ENCODE measurements at regions of chr19 and their contacts with region 1.

Region 1: DNA sequence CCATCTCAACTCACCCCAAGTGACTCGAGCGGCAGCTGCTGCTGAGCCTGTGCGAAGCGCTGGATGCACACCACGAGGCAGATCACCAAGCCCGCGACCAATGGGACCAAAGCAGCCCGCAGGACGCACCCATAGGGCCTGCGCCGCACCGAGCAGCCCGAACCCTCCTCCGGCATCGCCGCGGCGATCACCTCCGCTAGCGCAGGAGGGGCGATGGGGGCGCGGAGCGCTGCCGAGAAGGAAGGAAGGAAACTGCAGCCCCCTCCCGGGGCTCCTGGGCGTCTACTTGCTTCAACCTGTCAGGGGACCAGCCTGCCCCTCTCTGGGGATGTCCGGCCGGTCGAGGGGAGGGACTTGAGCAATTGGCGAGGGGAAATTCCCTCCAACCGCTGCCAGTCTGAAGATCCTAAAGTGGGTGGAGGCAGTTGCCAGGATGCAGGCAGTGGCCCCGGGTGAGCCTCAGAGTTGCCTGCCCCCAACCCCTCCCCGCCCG is at the start of gene CD70:
- DNase-seq: peak; percentile 64
- ATAC-seq: peak; percentile 67
- H3K4me3 Mint-ChIP-seq: peak within 1 kb of the TSS; percentile 88
- H3K27ac Mint-ChIP-seq: peak within 1 kb of the TSS; percentile 82
- H3K4me1 Mint-ChIP-seq: peaks cover 68% of the 10 kb centered on the region
- H3K27me3 Mint-ChIP-seq: peaks cover 17% of the 10 kb centered on the region
- CTCF ChIP-seq: no peak
- total RNA-seq, gene CD70: 29.3 and 29.7 TPM in 2 replicates

Region 2: GRCh38 chr19:6362027-6362350 is 228.9 kb before region 1 on chr19:
- CTCF ChIA-PET with region 1: no interaction called
- POLR2A ChIA-PET with region 1: no interaction called
- intact Hi-C with region 1: loop called (anchors 5 kb)
- DNase-seq: no peak
- ATAC-seq: no peak
- H3K4me3 Mint-ChIP-seq: peak overlapping the region; percentile 87
- H3K27ac Mint-ChIP-seq: peak overlapping the region; percentile 78
- H3K4me1 Mint-ChIP-seq: peaks cover 11% of the 10 kb centered on the region
- H3K27me3 Mint-ChIP-seq: no peaks in the 10 kb centered on the region
- CTCF ChIP-seq: no peak

Region 3: DNA sequence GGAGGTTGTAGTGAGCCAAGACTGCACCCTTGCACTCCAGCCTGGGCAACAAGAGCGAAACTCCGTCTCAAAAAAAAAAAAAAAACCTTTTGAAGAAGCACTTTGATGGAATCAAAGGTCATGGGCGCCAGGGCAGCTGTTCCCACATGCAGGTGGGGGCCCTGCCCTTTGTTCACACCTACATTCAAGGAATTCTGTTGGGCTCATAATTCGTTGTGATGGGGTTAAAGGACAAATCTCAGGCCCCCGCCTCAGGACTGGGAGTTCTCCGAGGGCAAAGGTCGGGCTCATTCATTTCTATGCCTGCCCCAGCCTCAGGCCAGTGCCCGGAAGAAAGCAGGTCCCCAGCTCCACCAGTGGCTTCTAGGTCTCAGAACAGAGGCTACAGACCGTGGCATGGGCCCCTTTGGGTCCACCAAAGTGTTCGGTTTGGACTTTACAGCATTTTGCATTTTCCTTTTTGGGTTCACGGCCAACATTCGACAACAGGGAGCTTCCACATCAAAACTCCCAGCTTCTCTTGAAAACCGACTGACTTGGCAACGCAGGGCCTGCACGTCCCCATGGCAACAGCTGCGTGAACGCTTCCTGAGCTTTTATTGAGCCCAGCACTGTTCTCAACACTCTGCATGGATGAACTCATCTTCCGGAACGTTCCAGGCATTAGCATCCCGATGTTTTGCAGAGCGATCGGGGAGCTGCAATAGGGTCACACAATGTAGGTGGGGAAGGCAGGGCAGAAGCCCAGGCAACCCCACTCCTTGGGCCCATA is 187.8 kb before region 1 on chr19:
- CTCF ChIA-PET with region 1: no interaction called
- POLR2A ChIA-PET with region 1: no interaction called
- intact Hi-C with region 1: no loop called
- DNase-seq: no peak
- ATAC-seq: no peak
- H3K4me3 Mint-ChIP-seq: no peak overlapping the region
- H3K27ac Mint-ChIP-seq: no peak overlapping the region
- H3K4me1 Mint-ChIP-seq: no peaks in the 10 kb centered on the region
- H3K27me3 Mint-ChIP-seq: no peaks in the 10 kb centered on the region
- CTCF ChIP-seq: no peak

Region 4: GRCh38 chr19:6521718-6522646 is 68.9 kb before region 1 on chr19:
- CTCF ChIA-PET with region 1: interaction called, 5 read pairs
- POLR2A ChIA-PET with region 1: interaction called, 26 read pairs
- intact Hi-C with region 1: loop called (anchors 1 kb)
- DNase-seq: peak; percentile 70
- ATAC-seq: peak; percentile 73
- H3K4me3 Mint-ChIP-seq: peak overlapping the region; percentile 75
- H3K27ac Mint-ChIP-seq: peak overlapping the region; percentile 99
- H3K4me1 Mint-ChIP-seq: peaks cover 55% of the 10 kb centered on the region
- H3K27me3 Mint-ChIP-seq: no peaks in the 10 kb centered on the region
- CTCF ChIP-seq: no peak

Region 5: GRCh38 chr19:6535558-6536137 is 55.2 kb before region 1 on chr19:
- CTCF ChIA-PET with region 1: no interaction called
- POLR2A ChIA-PET with region 1: interaction called, 34 read pairs
- intact Hi-C with region 1: no loop called
- DNase-seq: no peak
- ATAC-seq: no peak
- H3K4me3 Mint-ChIP-seq: peak overlapping the region; percentile 59
- H3K27ac Mint-ChIP-seq: peak overlapping the region; percentile 83
- H3K4me1 Mint-ChIP-seq: peaks cover 57% of the 10 kb centered on the region
- H3K27me3 Mint-ChIP-seq: peaks cover 5% of the 10 kb centered on the region
- CTCF ChIP-seq: no peak

Region 6: GRCh38 chr19:6577476-6578125 is 13.3 kb before region 1 on chr19:
- CTCF ChIA-PET with region 1: no interaction called
- POLR2A ChIA-PET with region 1: interaction called, 38 read pairs
- intact Hi-C with region 1: loop called (anchors 1 kb)
- DNase-seq: peak; percentile 54
- ATAC-seq: peak; percentile 90
- H3K4me3 Mint-ChIP-seq: peak overlapping the region; percentile 68
- H3K27ac Mint-ChIP-seq: no peak overlapping the region
- H3K4me1 Mint-ChIP-seq: peaks cover 6% of the 10 kb centered on the region
- H3K27me3 Mint-ChIP-seq: no peaks in the 10 kb centered on the region
- CTCF ChIP-seq: no peak

Region 7: DNA sequence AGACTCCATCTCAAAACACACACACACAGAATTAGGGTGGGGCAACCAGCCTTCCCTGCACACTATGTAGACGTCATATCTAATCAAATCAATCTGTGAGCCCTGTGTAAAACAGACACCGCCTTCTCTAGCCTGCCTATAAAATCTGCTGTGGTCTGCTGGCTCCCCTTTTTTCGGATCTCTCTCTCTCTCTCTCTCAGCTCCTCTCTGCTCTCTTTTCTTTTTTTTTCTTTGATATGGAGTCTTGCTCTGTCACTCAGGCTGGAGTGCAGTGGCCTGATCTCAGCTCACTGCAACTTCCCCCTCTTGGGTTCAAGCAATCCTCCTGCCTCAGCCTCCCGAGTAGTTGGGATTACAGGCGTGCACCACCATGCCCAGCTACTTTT is 11.8 kb after region 1 on chr19:
- CTCF ChIA-PET with region 1: no interaction called
- POLR2A ChIA-PET with region 1: interaction called, 4 read pairs
- intact Hi-C with region 1: loop called (anchors 1 kb)
- DNase-seq: no peak
- ATAC-seq: no peak
- H3K4me3 Mint-ChIP-seq: no peak overlapping the region
- H3K27ac Mint-ChIP-seq: peak overlapping the region; percentile 46
- H3K4me1 Mint-ChIP-seq: peaks cover 46% of the 10 kb centered on the region
- H3K27me3 Mint-ChIP-seq: no peaks in the 10 kb centered on the region
- CTCF ChIP-seq: no peak

Region 8: DNA sequence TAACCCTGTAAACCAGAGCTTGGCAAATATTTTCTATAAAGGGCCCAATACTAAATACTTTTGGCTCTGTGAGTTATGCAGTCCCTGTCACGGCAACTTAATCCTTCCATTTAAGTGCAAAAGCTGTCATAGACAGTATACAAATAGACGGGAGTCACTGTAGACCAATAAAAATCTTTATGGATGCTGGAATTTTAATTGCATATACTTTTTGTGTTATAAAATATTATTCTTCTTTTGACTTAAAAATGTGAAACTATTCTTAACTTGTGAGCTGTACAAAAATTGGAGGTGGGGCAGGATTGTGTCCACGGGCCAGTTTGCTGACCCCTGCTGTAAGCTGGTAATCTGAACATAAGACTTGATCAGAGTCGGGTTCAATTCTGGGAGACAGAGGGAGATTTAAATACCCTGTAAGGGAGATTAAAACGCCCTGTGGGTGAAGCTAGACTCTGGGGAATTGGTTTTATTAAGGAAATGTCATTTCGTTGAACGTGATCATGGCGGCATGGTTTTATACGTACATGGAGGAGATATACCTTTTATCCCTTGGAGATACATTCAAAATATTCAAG is 57.4 kb after region 1 on chr19:
- CTCF ChIA-PET with region 1: no interaction called
- POLR2A ChIA-PET with region 1: no interaction called
- intact Hi-C with region 1: no loop called
- DNase-seq: no peak
- ATAC-seq: no peak
- H3K4me3 Mint-ChIP-seq: no peak overlapping the region
- H3K27ac Mint-ChIP-seq: no peak overlapping the region
- H3K4me1 Mint-ChIP-seq: no peaks in the 10 kb centered on the region
- H3K27me3 Mint-ChIP-seq: peaks cover 17% of the 10 kb centered on the region
- CTCF ChIP-seq: no peak